Posterior cingulate gyrus (tissue), 11 donors: ENCODE measurements at regions of chr6 and their contacts with region 1.

Region 1: DNA sequence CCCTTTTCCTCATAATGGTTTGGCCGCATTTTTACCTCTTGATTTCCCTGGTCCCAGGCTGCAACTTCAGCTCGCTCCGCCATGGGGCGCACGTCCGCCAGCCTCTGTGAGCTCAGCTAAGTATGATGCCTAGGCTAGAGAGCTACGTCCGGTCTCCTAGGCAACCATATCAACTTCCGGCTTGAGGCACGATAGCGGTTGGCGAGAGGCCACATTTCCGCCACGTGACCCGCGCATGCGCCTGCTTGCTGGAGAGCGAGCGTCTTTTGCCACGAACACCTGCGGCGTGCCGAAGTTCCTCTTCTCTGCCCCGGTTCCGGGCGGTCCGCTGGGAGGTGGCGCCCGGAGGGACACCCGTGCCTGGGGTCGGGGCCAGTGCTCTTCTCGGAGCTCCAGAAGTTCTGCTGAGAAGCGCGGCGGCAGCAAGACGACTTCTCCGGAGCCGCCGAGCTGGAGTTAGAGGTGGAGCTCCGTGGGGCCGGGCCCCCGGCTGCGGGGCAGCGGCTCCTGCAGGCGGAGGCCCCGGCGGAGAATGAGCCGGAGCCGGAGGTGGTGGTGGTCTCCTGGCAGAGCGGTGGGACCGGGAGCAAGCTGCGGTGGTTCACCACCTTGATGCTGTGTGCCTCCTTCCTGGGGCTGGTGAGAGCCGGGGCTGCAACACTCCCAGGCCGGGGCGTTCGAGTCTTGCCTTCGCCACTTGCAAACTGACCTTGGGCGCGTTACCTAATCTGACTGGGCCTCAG is 172.0 kb downstream of the SLC16A10 start:
- DNase-seq: peak; percentile 96 to 99 (median 98)

Region 2: DNA sequence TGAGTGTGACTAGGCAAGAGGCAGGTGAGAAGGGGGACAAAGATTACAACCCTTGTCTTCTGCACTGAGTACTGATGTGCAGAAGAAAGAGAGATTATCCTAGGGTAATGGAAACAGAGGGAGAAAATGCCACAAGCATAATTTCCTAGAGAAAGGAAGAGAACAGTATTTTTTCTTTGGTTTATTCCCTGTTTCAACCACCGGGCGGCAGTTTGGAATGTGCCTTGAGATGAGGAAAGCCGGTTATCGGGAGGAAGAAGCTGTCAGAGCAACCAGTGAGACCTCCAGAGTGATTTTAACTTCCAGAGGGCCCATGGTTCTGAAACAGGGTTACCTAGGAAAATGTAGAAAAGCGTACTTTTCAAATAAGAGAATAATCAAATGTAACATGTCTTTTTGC is 102.4 kb after region 1 on chr6:
- intact Hi-C with region 1: loop called (anchors 10 kb)
- DNase-seq: peak in 6 of 10 donors; percentile 34 to 87 (median 46)

Region 3: GRCh38 chr6:111478749-111479148 is 219.5 kb after region 1 on chr6:
- intact Hi-C with region 1: loop called (anchors 10 kb)
- DNase-seq: no peak

Region 4: DNA sequence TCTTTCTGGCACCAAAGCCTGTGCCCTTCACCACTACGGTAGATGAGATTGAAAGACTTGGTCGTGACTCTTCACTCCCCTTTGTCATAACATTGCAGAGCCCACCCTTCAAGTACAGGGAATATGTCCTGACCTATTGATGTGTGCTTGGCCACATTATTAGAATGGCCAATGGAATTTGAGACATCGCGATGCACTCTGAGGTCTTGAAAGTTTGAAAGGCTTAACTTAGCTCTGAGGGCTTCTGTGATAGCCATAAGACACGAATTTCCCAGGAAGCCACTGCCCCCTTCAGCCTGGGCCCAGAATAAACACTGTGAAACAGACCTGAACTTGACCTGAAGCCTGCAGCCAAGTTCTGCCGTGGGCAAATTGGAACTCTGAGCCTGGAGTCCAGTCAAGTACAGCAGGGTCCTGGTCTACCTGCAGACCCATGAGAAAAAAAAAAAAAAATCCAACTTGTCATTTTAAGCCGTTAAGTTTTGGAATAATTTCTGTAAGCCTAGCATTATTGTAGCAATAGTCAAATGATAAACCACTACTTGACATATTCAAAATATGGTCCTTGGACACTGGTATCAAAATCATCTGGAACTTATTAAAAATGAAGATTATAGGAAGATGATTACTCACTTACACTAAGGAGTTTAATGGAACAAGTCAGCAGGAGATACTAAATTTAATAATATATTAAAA is 383.4 kb after region 1 on chr6:
- intact Hi-C with region 1: loop called (anchors 1 kb)
- DNase-seq: peak in 6 of 10 donors; percentile 34 to 91 (median 54)

Region 5: DNA sequence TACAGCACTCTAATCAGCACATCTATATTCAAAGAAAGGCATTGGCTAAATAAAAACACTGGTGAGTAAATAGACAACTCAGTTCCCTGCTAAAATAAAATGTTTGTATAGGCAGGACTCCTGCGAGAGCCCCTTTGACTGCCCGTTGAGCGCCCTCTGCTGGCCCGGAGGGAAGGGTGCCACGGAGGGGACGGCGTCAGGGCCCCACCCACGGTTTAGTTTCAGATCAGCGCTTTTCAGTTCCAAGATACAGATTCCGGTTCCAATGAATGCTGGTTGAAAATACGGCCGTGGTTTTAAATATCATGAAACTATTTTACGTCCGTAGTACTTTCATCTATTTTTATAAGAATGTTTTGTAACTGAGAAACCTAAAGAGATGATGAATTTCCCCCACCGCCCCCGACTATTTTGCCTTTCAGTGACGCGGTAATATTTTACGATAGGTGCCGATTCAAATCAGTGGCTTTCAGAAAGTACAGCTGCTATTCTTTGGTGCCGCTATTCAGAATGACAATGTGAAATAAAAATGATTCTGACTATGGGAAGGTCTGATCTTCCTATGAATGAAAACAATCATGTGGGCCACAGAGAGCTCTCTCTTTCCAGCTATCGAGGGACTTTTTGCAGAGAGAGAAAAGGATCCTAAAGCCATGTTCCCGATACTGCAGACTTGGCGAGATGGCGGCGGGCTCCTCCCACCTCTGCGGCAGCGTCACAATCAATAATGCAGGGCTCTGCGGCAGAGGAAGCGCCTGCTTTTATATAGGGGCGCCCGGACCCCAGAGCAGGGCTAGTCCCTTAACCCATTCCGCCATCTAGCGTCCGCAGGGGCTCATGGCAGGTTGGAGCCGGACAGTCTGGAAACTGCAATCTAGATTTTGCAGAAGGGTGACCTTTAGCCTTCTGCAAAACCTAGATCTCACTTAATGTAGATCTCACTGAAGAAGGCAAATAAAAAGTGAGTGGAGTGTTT is 784.1 kb after region 1 on chr6:
- intact Hi-C with region 1: loop called (anchors 5 kb)
- DNase-seq: peak; percentile 83 to 98 (median 94)